PC-9 (cell line): ENCODE measurements at regions of chr17 and their contacts with region 1.

Region 1: GRCh38 chr17:29032013-29032856 is 10.7 kb upstream of the PIPOX start:
- DNase-seq: no peak
- H3K4me3 ChIP-seq: no peak overlapping the region
- H3K27ac ChIP-seq: no peak overlapping the region
- H3K4me1 ChIP-seq: no peaks in the 10 kb centered on the region
- H3K27me3 ChIP-seq: peaks cover 100% of the 10 kb centered on the region
- CTCF ChIP-seq: no peak

Region 2: DNA sequence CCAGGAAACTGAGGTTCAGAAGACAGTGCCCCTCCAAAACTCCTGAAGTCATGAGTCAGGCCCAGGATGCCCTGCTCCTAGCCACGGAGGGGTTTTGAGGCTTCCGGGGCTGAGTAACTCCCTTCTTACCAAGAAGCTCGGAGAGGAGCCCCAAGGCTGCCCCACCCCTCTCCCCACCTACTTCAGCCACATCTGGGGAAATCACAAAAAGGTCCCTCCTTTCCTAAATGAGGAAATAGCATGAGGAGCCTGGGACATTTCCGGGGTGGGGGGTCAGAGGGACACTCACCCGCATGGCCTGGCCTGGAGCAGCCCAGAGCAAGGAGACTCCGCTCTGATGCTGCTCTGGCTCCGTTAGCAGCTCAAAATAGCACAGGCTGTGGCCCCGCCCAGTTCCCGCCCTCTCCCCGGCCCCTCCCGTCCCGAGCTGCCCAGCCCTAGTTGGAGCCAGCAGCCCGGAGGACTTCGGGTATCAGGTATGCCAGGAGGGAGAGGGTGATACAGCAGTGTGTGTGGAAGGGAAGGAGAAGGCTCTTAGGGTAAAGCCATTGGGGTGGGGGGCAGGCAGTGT is 107.9 kb after region 1 on chr17:
- CTCF ChIA-PET with region 1: interaction called, 10 read pairs
- POLR2A ChIA-PET with region 1: no interaction called
- intact Hi-C with region 1: no loop called
- DNase-seq: peak in 1 of 2 experiments; percentile 59
- H3K4me3 ChIP-seq: no peak overlapping the region
- H3K27ac ChIP-seq: 0 out of 2 replicates have a peak overlapping the region, but pooled peaks have one; percentile 19
- H3K4me1 ChIP-seq: peaks cover 56% of the 10 kb centered on the region
- H3K27me3 ChIP-seq: no peaks in the 10 kb centered on the region
- CTCF ChIP-seq: no peak

Region 3: DNA sequence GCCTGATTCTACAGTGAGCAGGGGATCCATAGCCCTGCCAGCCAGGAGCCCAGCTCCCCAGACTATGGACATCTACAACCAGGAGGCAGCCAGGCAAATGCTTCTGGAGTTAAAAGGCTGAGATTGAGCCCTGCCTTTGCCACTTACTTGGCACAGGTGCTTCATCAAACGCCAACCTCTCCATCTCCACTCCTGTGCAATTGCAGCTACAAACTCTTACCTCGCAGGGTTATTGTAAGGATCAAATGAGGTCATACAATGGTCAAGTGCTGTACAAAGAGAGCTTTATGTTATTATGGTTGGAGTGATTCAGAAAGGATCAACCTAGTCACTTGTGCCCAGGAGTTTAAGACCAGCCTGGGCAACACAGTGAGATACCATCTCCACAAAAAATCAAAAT is 157.8 kb after region 1 on chr17:
- CTCF ChIA-PET with region 1: no interaction called
- POLR2A ChIA-PET with region 1: no interaction called
- intact Hi-C with region 1: no loop called
- DNase-seq: no peak
- H3K4me3 ChIP-seq: no peak overlapping the region
- H3K27ac ChIP-seq: no peak overlapping the region
- H3K4me1 ChIP-seq: peaks cover 9% of the 10 kb centered on the region
- H3K27me3 ChIP-seq: no peaks in the 10 kb centered on the region
- CTCF ChIP-seq: no peak

Region 4: DNA sequence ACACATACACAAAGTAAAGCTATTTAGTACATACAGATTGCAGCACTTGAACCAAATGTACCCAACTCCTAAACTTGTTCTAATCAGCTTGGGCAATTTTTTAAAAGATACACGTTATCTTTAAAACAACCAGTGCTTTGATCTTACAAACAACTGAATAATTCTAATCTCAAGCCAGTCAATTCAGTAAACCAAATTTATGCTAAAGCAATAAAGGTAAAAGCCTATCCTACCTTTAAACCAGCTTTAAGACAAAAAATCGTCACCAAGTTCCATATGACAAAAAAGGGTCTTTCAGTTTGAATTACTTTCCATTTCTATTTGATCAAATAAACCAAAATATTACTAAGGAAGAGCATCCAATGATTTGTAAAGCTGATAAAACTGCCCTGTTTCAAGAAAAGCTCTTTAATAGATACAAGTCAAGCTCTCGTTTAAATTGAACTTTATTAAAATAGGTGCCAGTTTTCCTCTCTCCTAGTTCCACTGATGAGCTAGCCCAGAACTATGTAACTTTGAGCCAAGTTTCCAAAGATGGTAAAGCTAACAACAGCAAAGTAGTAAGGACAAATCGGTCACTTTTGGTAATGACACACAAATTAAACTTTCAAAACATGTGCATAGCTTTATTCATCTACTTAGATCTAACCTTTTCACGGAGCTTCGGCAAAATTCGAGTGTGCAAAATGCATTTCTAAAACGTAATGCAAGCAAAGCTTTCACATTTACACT is 224.7 kb after region 1 on chr17:
- CTCF ChIA-PET with region 1: no interaction called
- POLR2A ChIA-PET with region 1: no interaction called
- intact Hi-C with region 1: no loop called
- DNase-seq: no peak
- H3K4me3 ChIP-seq: no peak overlapping the region
- H3K27ac ChIP-seq: peak overlapping the region; percentile 17; the same call in 1 of the 2 replicates
- H3K4me1 ChIP-seq: peaks cover 2% of the 10 kb centered on the region; the same call in 1 of the 2 replicates
- H3K27me3 ChIP-seq: no peaks in the 10 kb centered on the region
- CTCF ChIP-seq: no peak

Region 5: GRCh38 chr17:29389982-29390850 is 358.0 kb after region 1 on chr17 and contains the start of gene TAOK1:
- CTCF ChIA-PET with region 1: no interaction called
- POLR2A ChIA-PET with region 1: no interaction called
- intact Hi-C with region 1: no loop called
- DNase-seq: peak; percentile 87 to 98
- H3K4me3 ChIP-seq: peak within 1 kb of the TSS; percentile 79
- H3K27ac ChIP-seq: peak within 1 kb of the TSS; percentile 45
- H3K4me1 ChIP-seq: peaks cover 32% of the 10 kb centered on the region
- H3K27me3 ChIP-seq: no peaks in the 10 kb centered on the region
- CTCF ChIP-seq: no peak
- total RNA-seq, gene TAOK1: 39.0 and 51.1 TPM in 2 replicates